H1 (cell line): ENCODE measurements at regions of chr7 and their contacts with region 1.

Region 1: GRCh38 chr7:16918288-16918895 is 36.6 kb upstream of the AGR3 start:
- DNase-seq: no peak
- H3K4me3 ChIP-seq: no peak overlapping the region
- H3K27ac ChIP-seq: no peak overlapping the region
- H3K4me1 ChIP-seq: peaks cover 0 to 8% (median 0%) of the 10 kb centered on the region in 4 experiments; a peak in 1 of 7 replicates
- H3K27me3 ChIP-seq: no peaks in the 10 kb centered on the region
- CTCF ChIP-seq: peak in 2 of 3 experiments; percentile 42 to 51; a peak in 2 of 4 replicates
- EP300 ChIP-seq: no peak
- POLR2A ChIP-seq: no peak
- RAD21 ChIP-seq: peak; percentile 62 to 66

Region 2: DNA sequence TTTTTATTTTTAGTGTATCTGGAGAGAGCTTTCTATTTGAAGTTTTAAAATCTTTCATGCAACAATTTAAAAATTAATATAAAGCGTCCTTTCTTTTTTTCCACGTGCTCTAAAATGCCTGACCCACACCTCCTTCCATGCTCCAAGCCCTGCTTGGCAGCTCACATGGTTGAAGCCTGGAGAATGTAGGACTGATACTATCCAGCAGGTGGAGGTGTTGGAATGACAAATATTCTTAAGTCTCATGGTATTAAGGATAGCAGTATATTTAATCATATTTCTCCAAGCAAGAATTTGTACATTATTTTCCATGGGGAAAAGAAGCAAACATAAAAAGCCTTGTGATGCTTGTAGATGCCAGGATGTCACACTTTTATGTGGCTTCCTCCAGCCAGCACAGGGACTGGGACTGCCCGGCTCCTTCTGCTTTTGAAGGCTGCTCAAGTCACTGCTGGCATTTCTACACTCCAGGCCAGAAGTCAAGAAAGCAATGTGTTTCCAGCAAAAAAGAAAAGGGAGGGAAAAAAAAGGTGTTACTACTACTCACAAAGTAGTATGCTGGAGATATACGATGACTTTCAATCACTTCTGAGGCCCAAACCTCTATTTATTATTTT is 222.7 kb before region 1 on chr7:
- CTCF ChIA-PET with region 1: interaction called, 12 read pairs
- POLR2A ChIA-PET with region 1: no interaction called
- DNase-seq: no peak
- H3K4me3 ChIP-seq: no peak overlapping the region
- H3K27ac ChIP-seq: no peak overlapping the region
- H3K4me1 ChIP-seq: no peaks in the 10 kb centered on the region
- H3K27me3 ChIP-seq: no peaks in the 10 kb centered on the region
- CTCF ChIP-seq: peak; percentile 33 to 69 (median 36); a peak in 3 of 4 replicates
- EP300 ChIP-seq: no peak
- POLR2A ChIP-seq: no peak
- RAD21 ChIP-seq: peak; percentile 65 to 72

Region 3: GRCh38 chr7:16801111-16801542 is 117.3 kb before region 1 on chr7:
- CTCF ChIA-PET with region 1: interaction called, 36 read pairs
- POLR2A ChIA-PET with region 1: no interaction called
- DNase-seq: no peak
- H3K4me3 ChIP-seq: no peak overlapping the region
- H3K27ac ChIP-seq: no peak overlapping the region
- H3K4me1 ChIP-seq: no peaks in the 10 kb centered on the region
- H3K27me3 ChIP-seq: no peaks in the 10 kb centered on the region
- CTCF ChIP-seq: peak in 2 of 3 experiments; percentile 25 to 47; a peak in 2 of 4 replicates
- EP300 ChIP-seq: no peak
- POLR2A ChIP-seq: no peak
- RAD21 ChIP-seq: peak; percentile 53 to 56

Region 4: DNA sequence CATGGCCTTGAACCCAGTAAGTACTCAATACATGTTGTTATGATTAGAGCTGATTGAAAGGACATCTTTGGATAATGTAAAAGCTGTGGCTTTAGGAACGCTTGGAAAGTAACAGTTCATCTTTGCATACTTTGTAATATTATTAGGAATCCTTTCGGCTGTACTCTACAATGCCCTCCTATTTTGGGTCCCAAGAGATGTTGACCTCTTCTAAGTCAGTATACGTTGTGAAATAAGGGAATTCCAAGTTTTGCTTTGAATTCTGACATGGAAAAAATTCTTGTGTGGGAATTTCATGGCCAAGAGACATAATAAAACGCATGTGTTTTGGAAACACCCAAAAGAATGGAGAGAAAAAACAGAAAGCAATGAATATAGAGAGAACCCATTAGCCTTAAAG is 44.3 kb before region 1 on chr7:
- CTCF ChIA-PET with region 1: no interaction called
- POLR2A ChIA-PET with region 1: no interaction called
- DNase-seq: no peak
- H3K4me3 ChIP-seq: no peak overlapping the region
- H3K27ac ChIP-seq: no peak overlapping the region
- H3K4me1 ChIP-seq: no peaks in the 10 kb centered on the region
- H3K27me3 ChIP-seq: no peaks in the 10 kb centered on the region
- CTCF ChIP-seq: no peak
- EP300 ChIP-seq: no peak
- POLR2A ChIP-seq: no peak
- RAD21 ChIP-seq: no peak

Region 5: GRCh38 chr7:16891338-16891737 is 27.1 kb before region 1 on chr7:
- CTCF ChIA-PET with region 1: interaction called, 52 read pairs
- POLR2A ChIA-PET with region 1: no interaction called
- DNase-seq: no peak
- H3K4me3 ChIP-seq: no peak overlapping the region
- H3K27ac ChIP-seq: no peak overlapping the region
- H3K4me1 ChIP-seq: no peaks in the 10 kb centered on the region
- H3K27me3 ChIP-seq: no peaks in the 10 kb centered on the region
- CTCF ChIP-seq: peak in 2 of 3 experiments; percentile 72; a peak in 3 of 4 replicates
- EP300 ChIP-seq: no peak
- POLR2A ChIP-seq: no peak
- RAD21 ChIP-seq: peak; percentile 94 to 96

Region 6: DNA sequence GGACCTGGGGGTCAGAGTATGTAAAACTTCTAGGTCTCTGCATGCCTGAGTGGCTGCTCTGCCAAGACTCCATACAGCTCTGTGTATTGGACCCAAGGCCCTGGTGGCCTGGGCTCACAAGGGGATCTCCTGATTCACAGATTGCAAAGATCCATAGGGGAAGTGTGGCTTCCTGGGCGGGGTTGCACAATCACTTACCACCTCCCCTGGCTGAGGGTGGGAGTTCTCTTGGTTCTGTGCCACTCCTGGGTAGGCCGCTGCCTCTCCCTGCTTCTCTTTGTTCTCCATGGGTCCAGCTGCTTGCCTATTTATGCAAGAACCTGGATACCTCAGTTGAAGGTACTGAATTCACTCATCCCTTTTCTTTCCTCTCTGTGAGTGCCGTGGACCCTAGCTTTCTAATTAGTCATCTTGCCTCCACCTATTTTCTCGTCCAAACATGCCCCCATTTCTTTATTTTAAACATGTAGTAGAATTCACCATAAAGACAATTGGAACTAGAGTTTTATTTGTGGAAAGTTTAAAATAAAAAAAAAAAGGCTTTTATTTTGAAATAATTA is 18.1 kb before region 1 on chr7:
- CTCF ChIA-PET with region 1: interaction called, 14 read pairs
- POLR2A ChIA-PET with region 1: no interaction called
- DNase-seq: no peak
- H3K4me3 ChIP-seq: no peak overlapping the region
- H3K27ac ChIP-seq: no peak overlapping the region
- H3K4me1 ChIP-seq: peaks cover 0 to 3% (median under 1%) of the 10 kb centered on the region in 4 experiments; a peak in 2 of 7 replicates
- H3K27me3 ChIP-seq: no peaks in the 10 kb centered on the region
- CTCF ChIP-seq: no peak
- EP300 ChIP-seq: no peak
- POLR2A ChIP-seq: no peak
- RAD21 ChIP-seq: no peak

Region 7: GRCh38 chr7:16905300-16906044 is 12.9 kb before region 1 on chr7:
- CTCF ChIA-PET with region 1: interaction called, 17 read pairs
- POLR2A ChIA-PET with region 1: interaction called, 3 read pairs
- DNase-seq: no peak
- H3K4me3 ChIP-seq: peak overlapping the region in 1 of 4 experiments; percentile 18; a peak in 2 of 8 replicates
- H3K27ac ChIP-seq: no peak overlapping the region
- H3K4me1 ChIP-seq: peaks cover 1 to 4% (median 3%) of the 10 kb centered on the region in 4 experiments; a peak in 3 of 7 replicates
- H3K27me3 ChIP-seq: no peaks in the 10 kb centered on the region
- CTCF ChIP-seq: no peak
- EP300 ChIP-seq: no peak
- POLR2A ChIP-seq: no peak
- RAD21 ChIP-seq: no peak

Region 8: GRCh38 chr7:16929146-16929762 is 10.9 kb after region 1 on chr7:
- CTCF ChIA-PET with region 1: interaction called, 14 read pairs
- POLR2A ChIA-PET with region 1: interaction called, 3 read pairs
- DNase-seq: no peak
- H3K4me3 ChIP-seq: no peak overlapping the region
- H3K27ac ChIP-seq: no peak overlapping the region
- H3K4me1 ChIP-seq: no peaks in the 10 kb centered on the region
- H3K27me3 ChIP-seq: peaks cover 0 to 1% (median 0%) of the 10 kb centered on the region in 4 experiments; a peak in 1 of 7 replicates
- CTCF ChIP-seq: no peak
- EP300 ChIP-seq: no peak
- POLR2A ChIP-seq: no peak
- RAD21 ChIP-seq: no peak